ENCODE measurements at regions of chr7 and their contacts with region 1.

Region 1: DNA sequence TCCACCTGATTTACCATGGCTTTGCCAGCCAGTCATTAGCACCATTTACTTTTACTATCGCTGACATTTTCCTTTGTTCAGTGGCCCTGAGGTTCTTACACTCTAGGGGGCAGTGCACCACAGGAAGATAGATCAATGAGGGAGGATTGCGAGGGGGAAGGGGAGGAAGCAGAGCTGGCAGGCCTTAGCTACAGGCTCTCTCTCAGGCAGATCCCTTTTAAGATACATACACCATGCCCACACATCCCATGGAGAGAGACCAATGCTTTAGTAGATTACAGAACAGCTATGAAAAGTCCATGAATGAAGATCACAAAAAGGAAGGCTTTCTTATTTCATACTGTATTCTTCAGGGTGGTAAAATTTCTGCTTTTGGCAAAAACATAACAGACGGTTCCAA is 47.4 kb downstream of the DENND11 start:
- DNase-seq: peak; percentile 83
- H3K4me3 ChIP-seq: no peak overlapping the region
- H3K27ac ChIP-seq: no peak overlapping the region
- H3K4me1 ChIP-seq: no peaks in the 10 kb centered on the region
- H3K27me3 ChIP-seq: no peaks in the 10 kb centered on the region
- CTCF ChIP-seq: peak; percentile 81

Region 2: DNA sequence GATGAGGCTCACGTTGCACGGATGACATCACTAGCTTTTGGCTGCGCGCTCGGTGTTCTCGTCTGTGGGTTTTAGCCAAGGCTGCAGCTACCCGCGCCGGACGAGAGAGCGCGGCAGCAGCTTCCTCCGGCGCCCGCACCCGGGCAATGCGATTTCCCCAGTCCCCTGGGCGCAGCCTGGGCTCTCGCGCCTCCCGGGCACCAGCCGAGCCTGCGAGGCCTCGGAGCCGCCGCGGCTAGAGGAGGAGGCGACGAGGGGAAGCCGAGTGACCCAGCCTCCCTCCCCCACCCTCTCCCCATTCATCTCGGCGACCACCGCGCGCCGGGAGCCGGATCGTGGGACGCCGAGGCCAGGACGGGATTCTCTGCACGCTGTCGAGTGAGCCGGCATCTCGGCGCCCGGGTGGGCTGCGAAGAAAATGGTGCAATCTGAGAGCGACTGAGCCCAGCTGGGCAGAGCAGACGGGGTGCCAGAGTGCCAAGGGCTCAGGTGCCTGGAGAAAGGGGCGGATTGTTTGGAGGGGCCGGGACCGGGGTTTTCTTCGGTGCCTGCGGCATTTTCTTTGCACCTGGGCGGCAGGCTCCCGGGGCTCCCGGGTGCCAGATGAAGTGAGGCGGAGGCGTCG is 581.9 kb before region 1 on chr7:
- CTCF ChIA-PET with region 1: interaction called, 5 read pairs
- POLR2A ChIA-PET with region 1: no interaction called
- intact Hi-C with region 1: loop called (anchors 5 kb)
- DNase-seq: peak; percentile 75
- H3K4me3 ChIP-seq: peak overlapping the region; percentile 45
- H3K27ac ChIP-seq: no peak overlapping the region
- H3K4me1 ChIP-seq: peaks cover 16% of the 10 kb centered on the region
- H3K27me3 ChIP-seq: peaks cover 80% of the 10 kb centered on the region
- CTCF ChIP-seq: no peak

Region 3: GRCh38 chr7:141551094-141551781 is 103.3 kb before region 1 on chr7 and contains the start of gene AGK:
- CTCF ChIA-PET with region 1: no interaction called
- POLR2A ChIA-PET with region 1: no interaction called
- intact Hi-C with region 1: no loop called
- DNase-seq: peak; percentile 89
- H3K4me3 ChIP-seq: peak within 1 kb of the TSS; percentile 80
- H3K27ac ChIP-seq: peak within 1 kb of the TSS; percentile 56
- H3K4me1 ChIP-seq: peaks cover 10% of the 10 kb centered on the region
- H3K27me3 ChIP-seq: no peaks in the 10 kb centered on the region
- CTCF ChIP-seq: no peak
- total RNA-seq, gene AGK: 41.9 and 47.4 TPM in 2 replicates

Region 4: GRCh38 chr7:141737834-141738591 is 83.5 kb after region 1 on chr7 and contains the start of gene SSBP1:
- CTCF ChIA-PET with region 1: interaction called, 10 read pairs
- POLR2A ChIA-PET with region 1: no interaction called
- intact Hi-C with region 1: loop called (anchors 2 kb)
- DNase-seq: peak; percentile 98
- H3K4me3 ChIP-seq: peak within 1 kb of the TSS; percentile 66
- H3K27ac ChIP-seq: peak within 1 kb of the TSS; percentile 70
- H3K4me1 ChIP-seq: peaks cover 15% of the 10 kb centered on the region
- H3K27me3 ChIP-seq: no peaks in the 10 kb centered on the region
- CTCF ChIP-seq: peak; percentile 97
- total RNA-seq, gene SSBP1: 186 and 189 TPM in 2 replicates

Region 5: GRCh38 chr7:141785706-141786552 is 131.4 kb after region 1 on chr7:
- CTCF ChIA-PET with region 1: interaction called, 5 read pairs
- POLR2A ChIA-PET with region 1: no interaction called
- intact Hi-C with region 1: loop called (anchors 1 kb)
- DNase-seq: peak; percentile 63
- H3K4me3 ChIP-seq: no peak overlapping the region
- H3K27ac ChIP-seq: no peak overlapping the region
- H3K4me1 ChIP-seq: no peaks in the 10 kb centered on the region
- H3K27me3 ChIP-seq: no peaks in the 10 kb centered on the region
- CTCF ChIP-seq: peak; percentile 86

Region 6: GRCh38 chr7:141820067-141820466 is 165.5 kb after region 1 on chr7:
- CTCF ChIA-PET with region 1: no interaction called
- POLR2A ChIA-PET with region 1: no interaction called
- intact Hi-C with region 1: no loop called
- DNase-seq: no peak
- H3K4me3 ChIP-seq: no peak overlapping the region
- H3K27ac ChIP-seq: no peak overlapping the region
- H3K4me1 ChIP-seq: no peaks in the 10 kb centered on the region
- H3K27me3 ChIP-seq: no peaks in the 10 kb centered on the region
- CTCF ChIP-seq: no peak

Region 7: GRCh38 chr7:141844256-141844655 is 189.7 kb after region 1 on chr7:
- CTCF ChIA-PET with region 1: no interaction called
- POLR2A ChIA-PET with region 1: no interaction called
- intact Hi-C with region 1: no loop called
- DNase-seq: no peak
- H3K4me3 ChIP-seq: no peak overlapping the region
- H3K27ac ChIP-seq: no peak overlapping the region
- H3K4me1 ChIP-seq: no peaks in the 10 kb centered on the region
- H3K27me3 ChIP-seq: no peaks in the 10 kb centered on the region
- CTCF ChIP-seq: no peak

Measured in A673 (cell line).